ENCODE measurements at regions of chr22 and their contacts with region 1.

Region 1: GRCh38 chr22:35684270-35684700 is 33.4 kb upstream of the APOL5 start:
- DNase-seq: no peak

Region 2: GRCh38 chr22:35697142-35697541 is 12.9 kb after region 1 on chr22:
- CTCF ChIA-PET with region 1: no interaction called
- POLR2A ChIA-PET with region 1: no interaction called
- DNase-seq: no peak

Region 3: DNA sequence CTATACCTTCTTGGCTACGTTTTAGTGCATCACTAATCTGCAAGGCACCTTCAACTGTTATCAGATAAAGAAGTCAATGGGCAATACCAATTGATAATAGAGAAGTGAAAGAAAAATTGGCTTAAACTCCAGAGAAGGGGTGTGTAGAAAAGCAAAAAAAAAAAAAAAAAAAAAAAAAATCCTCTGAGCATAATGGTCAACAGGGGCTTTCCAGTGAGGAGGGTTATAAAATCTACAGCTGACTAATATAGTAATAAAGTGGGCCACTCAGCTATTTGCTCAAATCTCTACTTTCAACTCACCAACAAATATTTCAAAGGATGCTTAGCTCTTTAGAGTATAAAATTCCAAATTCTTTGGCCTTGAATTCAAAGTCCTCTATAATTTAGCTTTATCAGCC is 111.2 kb after region 1 on chr22:
- CTCF ChIA-PET with region 1: interaction called, 10 read pairs
- POLR2A ChIA-PET with region 1: no interaction called
- DNase-seq: no peak

Measured in HEK293T (cell line).